ENCODE measurements at regions of chr2 and their contacts with region 1.

Region 1: GRCh38 chr2:38190542-38191218 is 114.7 kb upstream of the CYP1B1 start:
- DNase-seq: no peak
- H3K4me3 ChIP-seq: no peak overlapping the region
- CTCF ChIP-seq: no peak

Region 2: DNA sequence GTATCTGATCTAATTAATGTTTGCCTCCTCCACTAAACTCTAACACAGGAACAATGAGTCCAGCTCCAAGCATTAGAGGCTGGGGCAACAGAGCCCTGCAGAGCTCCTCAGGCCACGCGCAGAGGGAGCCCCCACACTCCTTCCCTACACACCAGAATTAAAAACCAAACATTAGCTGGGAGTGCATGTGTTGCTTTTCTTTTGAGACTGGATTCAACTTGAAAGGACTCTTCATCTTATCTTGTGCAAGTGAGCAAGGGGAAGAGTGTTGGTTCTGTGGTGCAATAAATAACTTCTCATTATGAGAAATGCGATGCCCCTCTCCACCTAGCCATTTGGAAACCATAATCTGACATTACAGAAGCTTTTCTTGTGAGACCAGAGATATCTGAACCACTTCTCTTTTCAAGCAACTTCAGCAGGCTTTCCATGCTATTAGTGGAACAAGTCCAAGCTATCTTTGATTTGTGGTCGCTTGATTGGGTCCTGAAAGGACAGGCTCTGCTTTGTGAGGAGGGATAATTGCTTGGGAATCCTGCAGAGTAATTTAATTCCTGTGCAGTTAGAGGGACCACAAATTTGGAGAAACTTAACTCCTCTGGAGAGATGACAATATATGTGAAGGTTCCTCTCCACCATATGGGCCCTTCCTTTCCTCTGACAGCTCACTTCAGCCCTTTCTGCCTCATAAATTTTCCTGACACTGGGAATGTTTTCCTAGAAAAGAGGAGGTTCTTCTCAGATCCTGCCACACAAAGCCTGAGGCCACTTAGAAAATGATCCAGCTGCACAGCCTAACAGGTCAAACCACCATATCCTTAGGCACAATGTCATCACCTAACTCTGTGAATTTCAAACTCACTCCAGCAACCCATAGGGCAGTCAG is 74.0 kb after region 1 on chr2:
- in situ Hi-C with region 1: loop called (anchors 5 kb)
- DNase-seq: peak; percentile 22
- H3K4me3 ChIP-seq: no peak overlapping the region
- CTCF ChIP-seq: no peak